Activated T-helper 1 cell treated with anti-CD3 and anti-CD28 coated beads, Interleukin-12 subunit alpha, Interleukin-12 subunit beta, Interleukin-2, Interleukin-4 antibody, amounts not matched to agents 30 ng/mL and 10 ng/mL and 1 ng/mL, durations not matched to agents 14 hours and 24 hours and 36 hours (primary cell): ENCODE measurements at regions of chr19 and their contacts with region 1.

Region 1: GRCh38 chr19:43809762-43810696 is 7.8 kb upstream of the LYPD5 start:
- DNase-seq: no peak
- H3K4me3 Mint-ChIP-seq: no peak overlapping the region
- H3K27ac Mint-ChIP-seq: no peak overlapping the region
- H3K4me1 Mint-ChIP-seq: no peaks in the 10 kb centered on the region
- H3K27me3 Mint-ChIP-seq: peaks cover 14% of the 10 kb centered on the region

Region 2: GRCh38 chr19:43430142-43430710 is 379.8 kb before region 1 on chr19:
- intact Hi-C with region 1: loop called (anchors 5 kb)
- DNase-seq: no peak
- H3K4me3 Mint-ChIP-seq: peak overlapping the region; percentile 30
- H3K27ac Mint-ChIP-seq: peak overlapping the region; percentile 44
- H3K4me1 Mint-ChIP-seq: peaks cover 29% of the 10 kb centered on the region
- H3K27me3 Mint-ChIP-seq: peaks cover 9% of the 10 kb centered on the region

Region 3: GRCh38 chr19:43446746-43447489 is 363.1 kb before region 1 on chr19:
- intact Hi-C with region 1: loop called (anchors 1 kb)
- DNase-seq: peak; percentile 68
- H3K4me3 Mint-ChIP-seq: no peak overlapping the region
- H3K27ac Mint-ChIP-seq: no peak overlapping the region
- H3K4me1 Mint-ChIP-seq: peaks cover 29% of the 10 kb centered on the region
- H3K27me3 Mint-ChIP-seq: no peaks in the 10 kb centered on the region

Region 4: GRCh38 chr19:43555185-43555770 is 254.8 kb before region 1 on chr19:
- intact Hi-C with region 1: loop called (anchors 5 kb)
- DNase-seq: peak; percentile 75
- H3K4me3 Mint-ChIP-seq: no peak overlapping the region
- H3K27ac Mint-ChIP-seq: peak overlapping the region; percentile 18
- H3K4me1 Mint-ChIP-seq: peaks cover 9% of the 10 kb centered on the region
- H3K27me3 Mint-ChIP-seq: no peaks in the 10 kb centered on the region

Region 5: GRCh38 chr19:43743022-43743421 is 67.0 kb before region 1 on chr19:
- intact Hi-C with region 1: loop called (anchors 1 kb)
- DNase-seq: no peak
- H3K4me3 Mint-ChIP-seq: no peak overlapping the region
- H3K27ac Mint-ChIP-seq: no peak overlapping the region
- H3K4me1 Mint-ChIP-seq: peaks cover 39% of the 10 kb centered on the region
- H3K27me3 Mint-ChIP-seq: no peaks in the 10 kb centered on the region

Region 6: GRCh38 chr19:43765109-43765876 is 44.7 kb before region 1 on chr19:
- intact Hi-C with region 1: loop called (anchors 1 kb)
- DNase-seq: peak; percentile 81
- H3K4me3 Mint-ChIP-seq: peak overlapping the region; percentile 50
- H3K27ac Mint-ChIP-seq: peak overlapping the region; percentile 90
- H3K4me1 Mint-ChIP-seq: peaks cover 87% of the 10 kb centered on the region
- H3K27me3 Mint-ChIP-seq: no peaks in the 10 kb centered on the region

Region 7: DNA sequence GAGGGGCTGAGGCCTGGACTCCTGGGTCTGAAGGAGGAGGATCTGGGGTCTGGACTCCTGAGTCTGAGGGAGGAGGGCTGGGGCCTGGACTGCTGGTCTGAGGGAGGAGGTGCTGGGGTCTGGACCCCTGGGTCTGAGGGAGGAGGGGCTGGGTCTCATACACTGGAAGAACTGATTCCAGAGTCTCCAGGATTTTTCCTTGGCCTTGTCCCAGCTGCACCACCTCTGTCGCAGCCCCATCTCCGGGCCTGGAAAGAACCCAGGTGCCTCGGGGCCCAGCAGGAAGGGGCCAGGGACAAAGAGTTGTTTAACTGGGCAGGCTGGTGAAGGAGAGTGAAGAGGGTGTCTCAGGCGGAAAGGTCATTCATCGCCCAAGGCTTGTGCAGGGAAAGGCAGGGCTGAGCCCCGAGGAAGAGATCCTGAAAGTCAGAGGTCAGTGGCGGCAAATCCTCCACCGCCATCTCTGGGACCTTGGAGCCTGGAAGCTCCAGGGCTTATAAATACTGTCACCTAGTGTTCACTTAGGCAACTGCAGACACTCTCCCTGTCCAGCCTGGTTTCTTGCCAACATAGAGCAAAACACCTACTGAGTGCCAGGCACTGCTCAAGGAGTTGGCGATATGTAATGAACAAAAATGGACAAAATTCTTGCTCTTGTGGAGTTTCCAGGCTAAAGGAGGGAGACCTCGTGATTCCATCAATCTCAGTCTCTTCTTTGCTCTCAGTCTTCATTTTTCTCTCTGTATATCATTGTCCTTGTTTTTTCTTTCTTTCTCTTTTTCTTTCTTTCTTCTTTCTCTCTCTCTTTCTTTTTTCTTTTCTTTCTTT is 24.8 kb before region 1 on chr19:
- intact Hi-C with region 1: loop called (anchors 1 kb)
- DNase-seq: peak; percentile 51
- H3K4me3 Mint-ChIP-seq: peak overlapping the region; percentile 66
- H3K27ac Mint-ChIP-seq: peak overlapping the region; percentile 92
- H3K4me1 Mint-ChIP-seq: peaks cover 41% of the 10 kb centered on the region
- H3K27me3 Mint-ChIP-seq: no peaks in the 10 kb centered on the region

Region 8: GRCh38 chr19:43798546-43799409 is 11.3 kb before region 1 on chr19:
- intact Hi-C with region 1: no loop called
- DNase-seq: peak; percentile 34
- H3K4me3 Mint-ChIP-seq: peak overlapping the region; percentile 72
- H3K27ac Mint-ChIP-seq: peak overlapping the region; percentile 38
- H3K4me1 Mint-ChIP-seq: peaks cover 6% of the 10 kb centered on the region
- H3K27me3 Mint-ChIP-seq: peaks cover 14% of the 10 kb centered on the region

Region 9: DNA sequence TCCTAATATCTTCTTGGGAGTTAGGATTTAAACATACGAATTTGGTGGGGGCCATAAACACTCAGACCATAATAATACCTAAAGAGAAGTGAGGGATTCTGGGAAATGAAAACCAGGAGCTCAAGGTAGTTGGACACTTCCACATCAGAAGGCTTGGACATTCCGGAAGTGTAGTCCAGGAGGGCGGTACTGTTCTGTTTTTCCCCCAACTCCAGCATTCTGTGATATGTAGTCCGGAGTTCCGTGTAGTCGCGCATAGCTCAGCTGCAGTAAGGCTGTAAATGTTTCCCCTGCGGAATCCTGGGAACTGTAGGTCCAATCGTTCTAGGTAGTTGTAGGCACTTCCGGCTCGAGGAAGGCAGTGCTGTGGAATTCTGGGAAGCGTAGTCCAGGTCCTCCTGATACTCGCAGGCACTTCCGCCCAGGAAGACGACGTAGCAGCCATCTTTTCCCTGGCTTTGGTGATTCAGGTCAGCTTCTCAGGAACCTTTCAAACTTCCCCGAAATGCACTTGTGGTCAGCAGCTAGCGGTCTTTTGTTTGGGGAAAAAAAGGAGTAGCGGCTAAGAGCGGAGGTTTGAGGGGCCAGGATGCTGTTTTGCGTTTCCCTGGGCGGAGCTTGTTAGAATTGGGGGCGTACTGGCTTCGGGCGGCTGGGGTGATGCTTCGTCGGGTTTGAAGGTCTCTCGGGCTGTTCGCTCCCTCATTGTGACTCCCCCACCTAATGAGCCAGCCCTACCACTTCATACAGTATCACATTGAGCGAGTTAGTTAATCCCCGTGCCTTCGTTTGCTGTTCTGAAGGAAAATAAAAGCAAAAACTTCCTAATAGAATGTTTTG is 354.9 kb after region 1 on chr19 and contains the start of gene ZNF226:
- intact Hi-C with region 1: no loop called
- DNase-seq: peak; percentile 71
- H3K4me3 Mint-ChIP-seq: peak within 1 kb of the TSS; percentile 90
- H3K27ac Mint-ChIP-seq: peak within 1 kb of the TSS; percentile 84
- H3K4me1 Mint-ChIP-seq: peaks cover 29% of the 10 kb centered on the region
- H3K27me3 Mint-ChIP-seq: no peaks in the 10 kb centered on the region
- total RNA-seq, gene ZNF226: 10.5 and 11.6 TPM in 2 replicates